ENCODE measurements at regions of chr22 and their contacts with region 1.

Region 1: GRCh38 chr22:19986410-19987341 is 29.9 kb downstream of the ARVCF start:
- DNase-seq: peak; percentile 78
- ATAC-seq: peak; percentile 89
- H3K4me3 ChIP-seq: peak overlapping the region in 4 of 5 experiments; percentile 41 to 66 (median 64)
- H3K4me3 Mint-ChIP-seq: peak overlapping the region; percentile 72
- H3K27ac ChIP-seq: no peak overlapping the region
- H3K27ac Mint-ChIP-seq: no peak overlapping the region
- H3K4me1 ChIP-seq: peaks cover 10 to 13% of the 10 kb centered on the region in 2 donors
- H3K4me1 Mint-ChIP-seq: peaks cover 7% of the 10 kb centered on the region
- H3K27me3 ChIP-seq: peaks cover 0 to 11% (median 0%) of the 10 kb centered on the region in 4 experiments
- H3K27me3 Mint-ChIP-seq: no peaks in the 10 kb centered on the region
- CTCF ChIP-seq: no peak

Region 2: GRCh38 chr22:19886601-19887255 is 99.9 kb before region 1 on chr22:
- CTCF ChIA-PET with region 1: no interaction called
- POLR2A ChIA-PET with region 1: no interaction called
- intact Hi-C with region 1: no loop called
- DNase-seq: peak; percentile 49
- ATAC-seq: peak; percentile 57
- H3K4me3 ChIP-seq: no peak overlapping the region
- H3K4me3 Mint-ChIP-seq: peak overlapping the region; percentile 8
- H3K27ac ChIP-seq: peak overlapping the region in 1 of 2 donors; percentile 58
- H3K27ac Mint-ChIP-seq: peak overlapping the region; percentile 91
- H3K4me1 ChIP-seq: peaks cover 25 to 30% of the 10 kb centered on the region in 2 donors
- H3K4me1 Mint-ChIP-seq: peaks cover 26% of the 10 kb centered on the region
- H3K27me3 ChIP-seq: no peaks in the 10 kb centered on the region
- H3K27me3 Mint-ChIP-seq: no peaks in the 10 kb centered on the region
- CTCF ChIP-seq: no peak

Region 3: DNA sequence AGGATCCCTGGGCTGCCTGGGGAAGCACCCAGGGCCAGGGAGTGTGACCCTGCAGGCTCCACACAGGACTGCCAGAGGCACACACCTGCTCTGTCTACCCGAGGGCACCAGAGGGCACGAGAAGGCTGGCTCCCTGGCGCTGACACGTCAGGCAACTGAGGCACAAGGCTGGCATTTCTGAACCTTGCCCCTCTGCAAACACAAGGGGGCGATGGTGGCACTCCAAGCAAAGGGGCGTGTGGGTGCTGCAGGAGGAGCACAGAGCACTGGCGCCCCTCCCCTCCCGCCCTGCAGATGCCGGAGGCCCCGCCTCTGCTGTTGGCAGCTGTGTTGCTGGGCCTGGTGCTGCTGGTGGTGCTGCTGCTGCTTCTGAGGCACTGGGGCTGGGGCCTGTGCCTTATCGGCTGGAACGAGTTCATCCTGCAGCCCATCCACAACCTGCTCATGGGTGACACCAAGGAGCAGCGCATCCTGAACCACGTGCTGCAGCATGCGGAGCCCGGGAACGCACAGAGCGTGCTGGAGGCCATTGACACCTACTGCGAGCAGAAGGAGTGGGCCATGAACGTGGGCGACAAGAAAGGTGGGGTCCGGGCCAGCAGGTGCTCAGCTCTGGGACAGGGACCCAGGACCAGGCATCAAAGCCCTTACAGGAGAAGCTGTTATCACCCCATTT is 24.3 kb before region 1 on chr22:
- CTCF ChIA-PET with region 1: no interaction called
- POLR2A ChIA-PET with region 1: no interaction called
- intact Hi-C with region 1: no loop called
- DNase-seq: peak; percentile 32
- ATAC-seq: peak; percentile 69
- H3K4me3 ChIP-seq: no peak overlapping the region
- H3K4me3 Mint-ChIP-seq: no peak overlapping the region
- H3K27ac ChIP-seq: no peak overlapping the region
- H3K27ac Mint-ChIP-seq: no peak overlapping the region
- H3K4me1 ChIP-seq: no peaks in the 10 kb centered on the region
- H3K4me1 Mint-ChIP-seq: peaks cover 12% of the 10 kb centered on the region
- H3K27me3 ChIP-seq: no peaks in the 10 kb centered on the region
- H3K27me3 Mint-ChIP-seq: no peaks in the 10 kb centered on the region
- CTCF ChIP-seq: peak; percentile 53

Region 4: GRCh38 chr22:20000169-20000621 is 13.5 kb after region 1 on chr22:
- CTCF ChIA-PET with region 1: no interaction called
- POLR2A ChIA-PET with region 1: no interaction called
- intact Hi-C with region 1: no loop called
- DNase-seq: no peak
- ATAC-seq: no peak
- H3K4me3 ChIP-seq: no peak overlapping the region
- H3K4me3 Mint-ChIP-seq: no peak overlapping the region
- H3K27ac ChIP-seq: no peak overlapping the region
- H3K27ac Mint-ChIP-seq: no peak overlapping the region
- H3K4me1 ChIP-seq: no peaks in the 10 kb centered on the region
- H3K4me1 Mint-ChIP-seq: no peaks in the 10 kb centered on the region
- H3K27me3 ChIP-seq: no peaks in the 10 kb centered on the region
- H3K27me3 Mint-ChIP-seq: no peaks in the 10 kb centered on the region
- CTCF ChIP-seq: no peak

Region 5: DNA sequence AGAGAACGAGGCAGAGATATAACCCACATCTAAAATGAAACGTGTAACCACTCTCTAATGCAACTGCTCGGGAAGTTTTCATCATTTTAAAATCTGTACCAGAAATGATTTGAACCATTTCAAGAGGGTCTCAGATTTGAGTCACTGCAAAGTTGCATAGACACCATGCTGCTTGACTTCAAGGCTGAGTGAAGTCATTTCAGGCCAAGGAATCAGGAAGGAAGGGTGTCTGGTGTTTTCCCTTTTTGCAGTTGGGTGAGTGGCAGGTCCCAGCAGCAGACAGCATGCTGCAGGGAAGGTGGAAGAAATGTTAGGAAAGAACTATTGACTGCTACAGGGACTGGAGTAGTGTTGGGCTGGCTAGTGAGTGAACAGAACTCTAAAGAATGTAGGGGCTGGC is 50.7 kb after region 1 on chr22:
- CTCF ChIA-PET with region 1: interaction called, 3 read pairs
- POLR2A ChIA-PET with region 1: no interaction called
- intact Hi-C with region 1: loop called (anchors 5 kb)
- DNase-seq: no peak
- ATAC-seq: no peak
- H3K4me3 ChIP-seq: no peak overlapping the region
- H3K4me3 Mint-ChIP-seq: peak overlapping the region; percentile 55
- H3K27ac ChIP-seq: no peak overlapping the region
- H3K27ac Mint-ChIP-seq: peak overlapping the region; percentile 96
- H3K4me1 ChIP-seq: peaks cover 14 to 45% of the 10 kb centered on the region in 2 donors
- H3K4me1 Mint-ChIP-seq: peaks cover 56% of the 10 kb centered on the region
- H3K27me3 ChIP-seq: no peaks in the 10 kb centered on the region
- H3K27me3 Mint-ChIP-seq: no peaks in the 10 kb centered on the region
- CTCF ChIP-seq: no peak

Region 6: DNA sequence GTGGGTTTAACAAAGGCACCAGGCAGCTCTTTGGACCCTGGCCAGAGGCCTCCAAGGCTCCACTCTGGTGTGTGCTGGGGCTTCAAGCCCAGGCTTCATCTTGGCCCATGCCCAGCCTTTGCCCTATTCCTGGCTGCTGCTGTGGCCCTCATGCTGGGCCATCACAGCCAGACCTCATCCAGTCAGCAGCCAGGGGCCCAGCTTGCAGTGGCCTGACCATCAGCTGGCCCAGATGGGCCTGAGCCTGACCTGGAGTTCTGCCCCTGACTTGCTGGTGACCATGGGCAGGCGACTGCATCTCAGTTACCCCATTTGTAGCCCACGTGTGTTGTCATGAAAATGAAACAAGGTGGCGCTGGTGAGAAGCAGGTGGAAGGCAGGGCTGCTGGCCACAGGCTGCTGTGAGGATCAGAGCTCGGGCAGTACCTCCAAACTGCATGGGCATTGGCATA is 596.8 kb after region 1 on chr22:
- CTCF ChIA-PET with region 1: no interaction called
- POLR2A ChIA-PET with region 1: no interaction called
- intact Hi-C with region 1: loop called (anchors 5 kb)
- DNase-seq: no peak
- ATAC-seq: no peak
- H3K4me3 ChIP-seq: no peak overlapping the region
- H3K4me3 Mint-ChIP-seq: no peak overlapping the region
- H3K27ac ChIP-seq: no peak overlapping the region
- H3K27ac Mint-ChIP-seq: no peak overlapping the region
- H3K4me1 ChIP-seq: no peaks in the 10 kb centered on the region
- H3K4me1 Mint-ChIP-seq: no peaks in the 10 kb centered on the region
- H3K27me3 ChIP-seq: no peaks in the 10 kb centered on the region
- H3K27me3 Mint-ChIP-seq: no peaks in the 10 kb centered on the region
- CTCF ChIP-seq: no peak